Breast epithelium (tissue), 4 donors: ENCODE measurements at regions of chr6 and their contacts with region 1.

Region 1: GRCh38 chr6:143639863-143640262 is 37.9 kb upstream of the PHACTR2 start:
- DNase-seq: no peak
- H3K4me3 ChIP-seq: no peak overlapping the region
- H3K27ac ChIP-seq: no peak overlapping the region
- H3K4me1 ChIP-seq: no peaks in the 10 kb centered on the region
- H3K27me3 ChIP-seq: no peaks in the 10 kb centered on the region
- CTCF ChIP-seq: no peak
- POLR2A ChIP-seq: no peak

Region 2: DNA sequence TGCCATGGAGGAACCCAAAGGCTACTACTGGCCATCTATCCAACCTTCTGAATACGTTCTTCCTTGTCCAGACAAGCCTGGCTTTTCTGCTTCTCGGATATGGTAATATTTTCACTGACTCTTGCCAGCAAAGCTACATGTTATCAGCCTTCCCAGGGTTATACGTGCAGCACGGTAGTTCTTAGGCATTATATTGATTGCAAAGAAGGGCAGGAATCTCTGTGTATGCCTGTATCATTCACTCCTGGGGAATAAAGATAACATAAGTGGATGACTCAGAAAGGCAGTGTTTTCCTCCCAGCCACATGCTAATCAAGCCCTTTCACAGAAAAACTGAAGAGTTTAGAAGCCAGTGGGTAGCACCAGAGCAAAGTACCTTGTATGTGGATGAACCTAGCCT is 1239.4 kb before region 1 on chr6:
- intact Hi-C with region 1: no loop called
- DNase-seq: no peak
- H3K4me3 ChIP-seq: no peak overlapping the region
- H3K27ac ChIP-seq: no peak overlapping the region
- H3K4me1 ChIP-seq: no peaks in the 10 kb centered on the region
- H3K27me3 ChIP-seq: no peaks in the 10 kb centered on the region
- CTCF ChIP-seq: no peak
- POLR2A ChIP-seq: no peak

Region 3: GRCh38 chr6:142702501-142703460 is 937.1 kb before region 1 on chr6:
- intact Hi-C with region 1: loop called (anchors 5 kb)
- DNase-seq: peak in 1 of 2 donors; percentile 25
- H3K4me3 ChIP-seq: no peak overlapping the region
- H3K27ac ChIP-seq: no peak overlapping the region
- H3K4me1 ChIP-seq: no peaks in the 10 kb centered on the region
- H3K27me3 ChIP-seq: no peaks in the 10 kb centered on the region
- CTCF ChIP-seq: no peak
- POLR2A ChIP-seq: no peak

Region 4: DNA sequence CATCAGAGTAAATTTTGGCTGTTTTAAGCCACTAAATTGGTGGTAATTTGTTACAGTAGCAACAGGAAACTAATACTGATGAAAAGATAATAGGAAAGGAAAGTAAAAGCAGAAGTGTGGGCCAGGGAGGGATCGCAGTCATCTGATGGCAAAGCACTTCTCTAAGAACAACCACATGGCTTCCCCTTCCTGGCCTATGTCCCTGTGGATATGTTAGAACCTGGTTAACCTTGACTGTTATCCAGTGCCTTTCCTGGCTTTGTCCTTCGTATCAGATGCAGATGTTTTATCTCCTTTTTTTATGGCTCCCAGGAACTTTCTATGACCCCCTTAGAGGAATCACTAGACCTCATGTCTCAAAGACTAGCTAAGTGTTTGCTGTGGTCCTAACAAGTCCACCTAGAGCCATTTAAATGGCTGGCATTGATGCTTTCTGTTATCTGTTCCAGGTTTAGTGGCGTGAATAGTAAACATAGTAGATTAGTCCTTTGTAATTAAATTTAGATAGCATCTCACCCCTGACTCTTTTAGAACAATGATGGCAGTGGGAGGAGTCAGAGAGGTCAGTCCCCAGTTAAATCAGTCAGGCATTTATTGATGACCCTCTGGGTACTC is 41.3 kb before region 1 on chr6:
- intact Hi-C with region 1: loop called (anchors 2 kb)
- DNase-seq: no peak
- H3K4me3 ChIP-seq: no peak overlapping the region
- H3K27ac ChIP-seq: peak overlapping the region in 1 of 2 donors; percentile 9
- H3K4me1 ChIP-seq: no peaks in the 10 kb centered on the region
- H3K27me3 ChIP-seq: no peaks in the 10 kb centered on the region
- CTCF ChIP-seq: no peak
- POLR2A ChIP-seq: no peak

Region 5: DNA sequence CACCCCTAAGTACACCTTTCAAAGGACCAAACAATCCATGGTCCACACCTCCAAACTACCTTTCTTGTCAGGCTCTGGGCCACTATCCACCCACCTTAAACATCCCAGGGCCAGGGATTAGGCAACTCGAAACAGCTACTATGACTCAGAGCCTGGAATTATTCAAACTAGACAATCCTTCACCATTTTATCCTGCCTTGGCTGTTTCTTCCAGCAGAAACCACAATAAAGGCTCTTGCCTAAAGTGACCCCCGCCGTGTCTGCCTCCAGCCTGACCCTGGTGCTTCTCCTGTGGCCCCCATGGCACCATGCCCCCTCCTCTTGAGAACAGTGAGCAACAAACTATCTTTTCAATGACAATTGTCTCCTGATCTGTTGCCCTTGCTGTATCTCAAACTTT is 1900.0 kb after region 1 on chr6:
- intact Hi-C with region 1: no loop called
- DNase-seq: no peak
- H3K4me3 ChIP-seq: no peak overlapping the region
- H3K27ac ChIP-seq: no peak overlapping the region
- H3K4me1 ChIP-seq: no peaks in the 10 kb centered on the region
- H3K27me3 ChIP-seq: no peaks in the 10 kb centered on the region
- CTCF ChIP-seq: no peak
- POLR2A ChIP-seq: no peak